ENCODE measurements at regions of chr7 and their contacts with region 1.

Region 1: DNA sequence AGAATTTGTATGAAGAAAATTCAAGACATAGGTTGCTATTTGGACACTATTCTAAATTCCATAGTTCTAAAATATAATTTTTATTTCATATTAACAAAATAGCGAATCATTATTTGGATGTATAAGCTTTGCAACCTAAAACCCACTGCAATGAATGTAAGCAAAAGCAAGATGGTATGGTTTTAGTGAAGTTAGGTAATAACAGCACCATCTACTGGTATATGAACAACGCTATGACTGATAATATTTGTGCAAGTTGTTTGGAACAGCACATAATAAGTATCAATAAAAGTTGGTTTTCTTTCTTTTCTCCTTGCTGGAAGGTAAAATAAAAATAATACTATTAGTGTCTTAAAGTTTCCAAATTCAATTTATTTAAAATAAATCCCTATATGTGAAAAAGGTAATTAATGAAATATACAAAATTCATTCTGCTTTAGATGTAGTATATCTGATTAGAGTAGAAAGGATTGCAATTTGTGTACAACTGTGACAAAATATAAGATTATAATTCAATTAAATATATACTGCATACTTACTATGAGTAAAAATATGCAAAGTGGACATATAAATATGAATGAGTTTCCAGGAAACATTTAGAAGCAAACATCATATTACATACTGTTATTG is 79.0 kb upstream of the LSM8 start:
- DNase-seq: no peak
- H3K4me3 Mint-ChIP-seq: no peak overlapping the region
- H3K27ac Mint-ChIP-seq: no peak overlapping the region
- H3K4me1 Mint-ChIP-seq: peaks cover 11% of the 10 kb centered on the region
- H3K27me3 Mint-ChIP-seq: no peaks in the 10 kb centered on the region
- CTCF ChIP-seq: no peak

Region 2: GRCh38 chr7:117993377-117994003 is 111.4 kb before region 1 on chr7:
- CTCF ChIA-PET with region 1: no interaction called
- intact Hi-C with region 1: loop called (anchors 10 kb)
- DNase-seq: peak; percentile 47
- H3K4me3 Mint-ChIP-seq: no peak overlapping the region
- H3K27ac Mint-ChIP-seq: no peak overlapping the region
- H3K4me1 Mint-ChIP-seq: peaks cover 12% of the 10 kb centered on the region
- H3K27me3 Mint-ChIP-seq: no peaks in the 10 kb centered on the region
- CTCF ChIP-seq: peak; percentile 55

Region 3: DNA sequence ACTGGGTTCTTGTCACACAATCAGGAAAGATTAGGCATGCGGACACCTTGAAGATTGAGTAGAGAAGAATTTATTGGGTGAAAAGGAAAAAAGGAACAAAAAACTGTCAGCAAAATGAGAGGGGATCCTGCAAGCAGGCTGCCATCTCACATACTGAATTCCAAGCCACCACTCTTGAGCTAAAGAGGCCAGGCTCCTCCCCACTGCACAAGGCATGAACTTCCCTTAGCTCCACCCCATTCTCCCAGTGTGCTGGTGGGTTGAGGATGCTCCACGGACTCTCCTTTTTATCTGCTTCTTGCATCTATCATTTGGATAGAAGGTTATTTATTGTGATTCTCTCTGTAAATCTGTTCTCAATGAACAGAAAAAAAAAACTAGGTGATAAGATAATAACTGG is 199.2 kb after region 1 on chr7:
- CTCF ChIA-PET with region 1: no interaction called
- intact Hi-C with region 1: no loop called
- DNase-seq: no peak
- H3K4me3 Mint-ChIP-seq: no peak overlapping the region
- H3K27ac Mint-ChIP-seq: no peak overlapping the region
- H3K4me1 Mint-ChIP-seq: peaks cover 8% of the 10 kb centered on the region
- H3K27me3 Mint-ChIP-seq: no peaks in the 10 kb centered on the region
- CTCF ChIP-seq: no peak

Measured in Calu3 (cell line).